Dorsolateral prefrontal cortex (tissue), 120 donors: ENCODE measurements at regions of chr20 and their contacts with region 1.

Region 1: DNA sequence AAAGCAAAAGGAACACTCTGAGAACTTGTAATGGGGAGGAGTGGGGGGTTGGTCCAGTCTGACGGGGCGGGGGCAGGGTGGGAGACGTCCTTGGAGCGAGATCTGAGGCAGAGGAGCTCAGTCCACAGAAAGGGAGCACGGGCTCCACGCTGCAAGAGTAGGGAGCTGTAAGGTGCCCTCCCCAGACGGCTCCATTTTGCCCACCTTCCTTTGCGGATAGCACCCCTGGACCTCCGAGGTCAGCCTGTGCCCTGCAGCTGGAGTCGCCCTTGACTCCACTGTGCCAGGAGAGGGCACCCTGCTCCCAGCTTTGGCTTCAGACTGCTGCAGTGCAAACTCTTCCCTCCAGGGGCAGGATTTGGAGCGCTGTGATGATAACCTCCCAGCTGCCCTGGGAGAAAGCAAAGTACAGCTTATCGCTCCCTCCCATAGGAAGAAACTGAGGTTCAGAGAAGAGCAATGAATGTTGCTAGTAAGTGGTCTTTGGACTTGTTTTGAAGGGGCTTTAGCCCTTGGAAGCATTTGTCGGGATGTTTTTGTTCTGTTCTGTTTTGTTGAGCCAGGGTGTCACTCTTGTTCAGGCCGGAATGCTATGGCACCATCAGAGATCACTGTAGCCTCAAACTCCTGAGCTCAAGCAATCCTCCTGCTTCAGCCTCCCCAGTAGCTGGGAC is 9.5 kb upstream of the AHCY start:
- DNase-seq: peak; percentile 72 to 92 (median 88)
- H3K4me3 ChIP-seq: peak overlapping the region in 58 of 59 donors; percentile 13 to 69 (median 47)
- H3K27ac ChIP-seq: peak overlapping the region in 41 of 59 donors; percentile 31 to 88 (median 71)
- H3K27me3 ChIP-seq: no peaks in the 10 kb centered on the region
- CTCF ChIP-seq: peak; percentile 85 to 100 (median 100)

Region 2: GRCh38 chr20:33689973-33690372 is 622.7 kb before region 1 on chr20:
- intact Hi-C with region 1: no loop called
- DNase-seq: peak in 1 of 10 donors; percentile 47
- H3K4me3 ChIP-seq: peak overlapping the region in 8 of 59 donors; percentile 6 to 40 (median 24)
- H3K27ac ChIP-seq: peak overlapping the region; percentile 21 to 99 (median 93)
- H3K27me3 ChIP-seq: no peaks in the 10 kb centered on the region
- CTCF ChIP-seq: peak in 1 of 56 donors; percentile 28

Region 3: GRCh38 chr20:34363062-34363464 is 50.4 kb after region 1 on chr20 and contains the start of gene ITCH:
- intact Hi-C with region 1: loop called (anchors 5 kb)
- DNase-seq: peak; percentile 93 to 97 (median 96)
- H3K4me3 ChIP-seq: peak within 1 kb of the TSS; percentile 61 to 99 (median 92)
- H3K27ac ChIP-seq: peak within 1 kb of the TSS; percentile 72 to 98 (median 94)
- H3K27me3 ChIP-seq: no peaks in the 10 kb centered on the region
- CTCF ChIP-seq: peak in 33 of 56 donors; percentile 6 to 57 (median 26)
- total RNA-seq, gene ITCH: 60.3 to 137 (median 86.3) TPM

Region 4: GRCh38 chr20:34473262-34473883 is 160.7 kb after region 1 on chr20:
- intact Hi-C with region 1: loop called (anchors 1 kb)
- DNase-seq: peak in 9 of 10 donors; percentile 35 to 70 (median 64)
- H3K4me3 ChIP-seq: no peak overlapping the region
- H3K27ac ChIP-seq: peak overlapping the region in 35 of 59 donors; percentile 1 to 77 (median 46)
- H3K27me3 ChIP-seq: no peaks in the 10 kb centered on the region
- CTCF ChIP-seq: peak in 51 of 56 donors; percentile 21 to 79 (median 44)

Region 5: DNA sequence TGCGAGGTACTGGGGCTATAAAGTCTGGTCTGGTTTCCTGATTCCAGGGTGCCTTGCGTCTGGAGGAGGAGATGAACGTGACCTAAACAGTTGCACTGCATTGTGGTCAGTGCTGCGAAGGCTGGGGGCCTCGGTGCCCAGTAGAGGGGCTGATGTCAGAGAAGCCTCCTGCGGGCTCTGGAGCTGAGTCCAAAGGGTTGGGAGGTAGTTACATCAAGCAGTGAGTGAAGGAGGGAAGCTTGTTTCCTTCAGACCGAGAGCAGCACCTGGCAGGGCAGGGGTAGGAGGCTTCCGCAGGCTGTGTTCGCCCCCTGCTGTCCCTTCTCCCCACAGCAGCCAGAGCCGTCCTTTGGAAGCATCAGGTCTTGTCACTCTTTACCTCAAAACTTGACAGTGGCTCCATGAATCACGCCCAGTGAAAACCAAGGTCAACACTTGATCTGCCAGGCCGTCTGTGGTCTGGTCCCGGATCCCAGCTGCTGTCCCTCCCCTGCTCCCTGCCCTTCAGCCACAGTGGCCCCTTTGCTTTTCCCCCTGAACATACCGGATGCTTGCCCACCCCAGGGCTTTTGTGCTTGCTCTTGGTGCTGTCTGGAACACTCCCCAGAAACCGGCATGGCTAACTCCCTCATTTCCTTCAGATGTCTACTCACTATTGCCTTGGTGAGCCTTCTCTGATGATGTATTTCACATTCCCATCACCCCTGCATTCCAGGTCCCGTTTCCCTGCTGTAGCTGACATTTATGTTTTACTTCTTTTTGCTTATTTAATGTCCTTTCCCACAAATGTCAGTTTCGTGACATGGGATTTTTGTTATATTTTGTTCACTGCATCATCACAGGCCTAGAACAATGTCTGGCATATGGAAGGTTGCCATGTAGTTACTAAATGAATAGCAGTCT is 210.5 kb after region 1 on chr20:
- intact Hi-C with region 1: loop called in 1 of 2 experiments (anchors 2 kb)
- DNase-seq: peak in 8 of 10 donors; percentile 35 to 72 (median 60)
- H3K4me3 ChIP-seq: peak overlapping the region in 16 of 59 donors; percentile 1 to 37 (median 14)
- H3K27ac ChIP-seq: peak overlapping the region; percentile 90 to 100 (median 98)
- H3K27me3 ChIP-seq: no peaks in the 10 kb centered on the region
- CTCF ChIP-seq: peak in 55 of 56 donors; percentile 19 to 77 (median 55)

Region 6: DNA sequence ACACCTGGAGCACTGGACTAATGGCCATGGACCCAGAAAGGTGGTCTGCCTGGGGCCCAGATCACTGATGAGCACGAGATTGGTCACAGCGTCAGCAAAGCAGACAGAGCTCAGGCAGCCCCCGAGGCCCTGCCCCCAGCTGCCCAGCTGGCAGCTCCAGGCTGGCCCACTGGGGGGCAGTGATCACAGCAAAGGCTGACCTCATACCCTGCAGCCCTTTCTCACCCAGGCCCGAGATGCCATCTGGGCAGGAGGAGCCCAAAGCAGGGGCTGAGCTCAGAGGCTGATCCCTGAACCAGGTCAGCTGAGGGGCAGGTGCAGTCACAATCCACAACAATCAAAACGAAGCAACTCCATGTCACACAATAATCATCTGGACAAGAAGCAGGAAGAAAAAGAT is 250.0 kb after region 1 on chr20:
- intact Hi-C with region 1: loop called in 1 of 2 experiments (anchors 5 kb)
- DNase-seq: peak in 1 of 10 donors; percentile 27
- H3K4me3 ChIP-seq: no peak overlapping the region
- H3K27ac ChIP-seq: peak overlapping the region in 56 of 59 donors; percentile 5 to 99 (median 94)
- H3K27me3 ChIP-seq: no peaks in the 10 kb centered on the region
- CTCF ChIP-seq: peak in 52 of 56 donors; percentile 7 to 66 (median 49)